AG04449 (cell line): ENCODE measurements at regions of chr5 and their contacts with region 1.

Region 1: DNA sequence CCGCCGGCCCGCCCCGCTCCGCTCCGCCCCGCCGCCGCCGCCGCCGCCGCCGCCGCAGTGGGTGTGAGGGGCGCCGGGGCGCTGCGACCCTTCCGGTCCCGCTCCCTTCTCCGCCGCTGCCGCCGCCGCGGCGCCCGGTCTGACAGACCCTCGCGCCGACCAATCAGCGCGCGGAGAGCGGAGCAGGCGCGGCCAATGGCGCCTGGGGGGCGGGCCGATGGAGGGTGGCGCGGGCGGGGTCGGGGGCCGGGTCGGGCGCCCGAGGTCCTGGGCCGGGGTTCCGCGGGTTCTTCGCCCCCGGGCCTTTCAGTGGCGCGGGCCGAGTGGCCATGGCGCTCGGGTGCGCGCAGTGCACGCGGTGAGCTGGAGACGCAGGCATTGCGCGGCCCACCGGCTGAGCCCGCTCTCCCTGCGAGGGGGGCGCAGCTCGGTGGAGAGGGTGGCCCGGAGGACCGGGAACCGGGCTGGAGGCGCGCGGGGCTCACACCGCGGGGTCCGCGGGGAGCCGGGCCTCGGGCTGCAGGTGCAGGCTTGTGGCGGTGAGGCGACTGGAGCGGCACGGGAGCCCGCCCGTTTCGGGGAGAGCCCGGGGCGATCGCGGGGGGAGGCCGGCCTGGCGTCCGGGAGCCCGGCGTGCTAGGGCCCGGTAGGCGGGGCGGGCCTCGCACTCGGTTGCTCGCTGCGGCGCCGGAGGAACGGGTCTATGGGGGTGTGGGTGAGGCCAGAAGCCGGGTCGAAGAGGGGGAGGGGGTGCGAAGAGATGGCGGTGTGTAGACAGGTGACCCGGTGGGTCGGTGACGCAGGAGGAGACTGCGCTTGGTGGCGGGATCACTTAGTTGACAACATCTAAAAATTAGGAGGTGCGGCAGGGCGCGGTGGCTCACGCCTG is at the start of gene MAPK9:
- DNase-seq: no peak
- H3K4me3 ChIP-seq: peak within 1 kb of the TSS; percentile 76
- CTCF ChIP-seq: no peak

Region 2: GRCh38 chr5:180135128-180135955 is 156.8 kb before region 1 on chr5:
- CTCF ChIA-PET with region 1: no interaction called
- POLR2A ChIA-PET with region 1: no interaction called
- DNase-seq: peak; percentile 5
- H3K4me3 ChIP-seq: no peak overlapping the region
- CTCF ChIP-seq: no peak

Region 3: DNA sequence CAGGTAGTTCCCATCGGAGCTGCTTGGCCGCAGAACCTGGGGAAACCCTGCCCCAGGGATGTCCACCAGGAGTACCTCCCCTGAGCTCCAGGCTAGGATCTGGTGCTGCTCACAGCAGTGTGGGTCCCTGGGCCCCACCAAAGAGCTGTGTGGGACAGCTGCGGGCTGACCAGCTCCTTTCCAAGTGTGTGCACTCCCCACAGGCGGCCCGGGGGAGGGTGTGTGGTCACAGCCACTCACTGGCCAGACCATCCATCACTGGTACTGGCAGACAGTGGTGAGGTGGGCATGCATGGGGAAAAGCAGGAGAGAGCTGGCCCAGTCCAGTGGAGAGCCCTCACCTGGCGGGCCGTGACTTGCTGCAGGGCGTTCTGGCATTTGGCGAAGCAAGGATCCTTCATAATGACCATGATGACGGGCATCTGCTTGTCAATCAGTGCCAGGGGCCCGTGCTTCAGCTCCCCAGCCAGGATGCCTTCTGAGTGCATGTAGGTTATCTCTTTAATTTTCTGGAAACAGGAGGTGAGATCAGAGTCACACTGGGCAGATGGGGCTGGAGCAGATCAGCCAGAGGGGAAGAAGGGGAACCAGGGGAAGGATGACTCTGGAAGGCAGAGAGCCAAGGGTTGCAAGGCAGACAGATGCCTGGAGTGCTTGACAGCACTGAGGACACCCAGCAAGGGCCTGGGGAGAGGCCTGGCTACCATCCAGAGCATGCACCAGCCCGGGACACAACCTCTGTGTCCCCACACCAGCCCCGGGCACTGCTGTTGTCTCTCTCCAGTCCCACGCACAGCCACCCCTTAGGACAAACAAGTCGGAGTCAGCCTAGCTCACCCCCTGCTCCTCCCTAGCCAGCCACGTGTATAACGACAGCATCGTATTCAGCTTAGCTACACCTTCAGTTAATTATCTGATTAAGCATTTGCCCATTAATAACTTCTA is 12.5 kb after region 1 on chr5:
- CTCF ChIA-PET with region 1: interaction called, 56 read pairs
- POLR2A ChIA-PET with region 1: no interaction called
- DNase-seq: no peak
- H3K4me3 ChIP-seq: no peak overlapping the region
- CTCF ChIP-seq: no peak

Region 4: DNA sequence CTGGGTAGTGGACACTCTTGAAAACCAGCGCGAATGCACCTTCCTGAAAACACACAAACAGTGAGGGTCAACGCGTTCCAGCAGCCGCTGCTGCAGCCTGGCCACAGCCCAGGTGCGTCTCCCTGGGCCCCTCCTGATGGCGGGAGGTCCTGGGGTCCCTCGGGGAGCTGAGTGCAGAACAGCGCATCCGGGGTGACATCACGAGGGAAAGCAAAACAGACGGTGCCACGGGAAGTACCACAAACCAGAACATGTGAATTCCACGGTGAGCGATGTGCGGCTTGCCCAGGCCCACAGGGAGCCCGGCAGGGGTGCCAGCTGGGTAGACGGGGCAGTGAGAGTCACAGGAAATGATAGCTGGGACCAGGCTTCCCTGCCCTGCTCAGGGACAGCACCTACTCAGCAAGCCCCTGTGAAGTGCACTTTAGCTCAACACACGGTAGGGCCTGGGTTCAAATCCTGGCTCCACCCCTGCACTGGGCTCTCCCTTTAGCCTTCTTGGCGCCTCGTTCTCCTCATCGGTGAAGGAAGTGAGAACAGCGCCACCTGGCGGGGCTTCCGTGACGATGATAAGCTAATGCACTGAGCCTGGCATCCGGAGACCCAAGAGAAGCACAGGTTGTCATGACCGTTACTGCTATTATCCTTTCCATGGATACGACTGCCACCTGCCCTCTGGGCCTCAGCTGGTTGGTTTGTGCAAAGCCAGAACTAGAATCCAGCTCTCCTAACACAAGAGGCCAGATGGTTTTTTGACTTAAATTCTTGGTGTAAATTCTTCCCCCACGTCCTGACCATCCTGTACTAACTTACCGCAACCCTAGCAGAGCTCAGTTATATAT is 36.3 kb after region 1 on chr5:
- CTCF ChIA-PET with region 1: interaction called, 84 read pairs
- POLR2A ChIA-PET with region 1: no interaction called
- DNase-seq: no peak
- H3K4me3 ChIP-seq: no peak overlapping the region
- CTCF ChIP-seq: peak; percentile 69

Region 5: GRCh38 chr5:180460834-180461233 is 168.6 kb after region 1 on chr5:
- CTCF ChIA-PET with region 1: interaction called, 279 read pairs
- POLR2A ChIA-PET with region 1: no interaction called
- DNase-seq: no peak
- H3K4me3 ChIP-seq: no peak overlapping the region
- CTCF ChIP-seq: no peak

Region 6: GRCh38 chr5:180494060-180494509 is 201.9 kb after region 1 on chr5 and contains the start of gene CNOT6:
- CTCF ChIA-PET with region 1: interaction called, 13 read pairs
- POLR2A ChIA-PET with region 1: no interaction called
- DNase-seq: peak; percentile 67
- H3K4me3 ChIP-seq: peak within 1 kb of the TSS; percentile 88
- CTCF ChIP-seq: no peak